ENCODE measurements at regions of chr1 and their contacts with region 1.

Region 1: GRCh38 chr1:31182352-31182751 is 57.3 kb downstream of the NKAIN1 start:
- DNase-seq: peak; percentile 55
- ATAC-seq: peak; percentile 68
- H3K4me3 Mint-ChIP-seq: no peak overlapping the region
- H3K27ac Mint-ChIP-seq: no peak overlapping the region
- H3K4me1 Mint-ChIP-seq: peaks cover 5% of the 10 kb centered on the region
- H3K27me3 Mint-ChIP-seq: peaks cover 45% of the 10 kb centered on the region
- CTCF ChIP-seq: no peak

Region 2: GRCh38 chr1:31135973-31136600 is 46.3 kb before region 1 on chr1:
- CTCF ChIA-PET with region 1: no interaction called
- POLR2A ChIA-PET with region 1: no interaction called
- intact Hi-C with region 1: no loop called
- DNase-seq: no peak
- ATAC-seq: no peak
- H3K4me3 Mint-ChIP-seq: no peak overlapping the region
- H3K27ac Mint-ChIP-seq: no peak overlapping the region
- H3K4me1 Mint-ChIP-seq: no peaks in the 10 kb centered on the region
- H3K27me3 Mint-ChIP-seq: peaks cover 2% of the 10 kb centered on the region
- CTCF ChIP-seq: no peak

Region 3: DNA sequence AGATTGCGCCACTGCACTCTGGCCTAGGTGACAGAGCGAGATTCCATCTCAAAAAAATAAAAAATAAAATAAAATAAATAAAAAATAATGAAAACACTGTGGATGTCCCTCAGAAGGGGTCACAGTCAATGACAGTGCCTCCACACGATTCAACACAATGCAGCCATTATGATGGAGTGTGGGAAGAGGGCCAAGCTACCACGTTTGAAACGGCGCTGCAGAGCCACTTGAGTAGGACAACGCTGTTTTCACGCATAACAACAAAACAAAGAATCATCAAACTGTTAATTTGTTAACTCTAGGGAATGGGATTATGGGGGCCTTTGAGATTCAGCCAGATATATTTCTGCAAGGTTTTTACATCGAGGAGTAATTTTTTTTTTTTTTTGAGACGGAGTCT is 20.9 kb after region 1 on chr1:
- CTCF ChIA-PET with region 1: no interaction called
- POLR2A ChIA-PET with region 1: no interaction called
- intact Hi-C with region 1: no loop called
- DNase-seq: no peak
- ATAC-seq: no peak
- H3K4me3 Mint-ChIP-seq: no peak overlapping the region
- H3K27ac Mint-ChIP-seq: no peak overlapping the region
- H3K4me1 Mint-ChIP-seq: no peaks in the 10 kb centered on the region
- H3K27me3 Mint-ChIP-seq: peaks cover 6% of the 10 kb centered on the region
- CTCF ChIP-seq: no peak

Region 4: GRCh38 chr1:31335007-31335406 is 152.7 kb after region 1 on chr1:
- CTCF ChIA-PET with region 1: interaction called, 3 read pairs
- POLR2A ChIA-PET with region 1: no interaction called
- intact Hi-C with region 1: loop called (anchors 2 kb)
- DNase-seq: no peak
- ATAC-seq: no peak
- H3K4me3 Mint-ChIP-seq: no peak overlapping the region
- H3K27ac Mint-ChIP-seq: no peak overlapping the region
- H3K4me1 Mint-ChIP-seq: peaks cover 7% of the 10 kb centered on the region
- H3K27me3 Mint-ChIP-seq: no peaks in the 10 kb centered on the region
- CTCF ChIP-seq: no peak

Measured in activated B cell treated with CpG ODN at 0.5 μM for 24 hours (primary cell).